MCF 10A (cell line): ENCODE measurements at regions of chr12 and their contacts with region 1.

Region 1: GRCh38 chr12:49636979-49637755 is 13.8 kb downstream of the PRPF40B start:
- DNase-seq: peak; percentile 59
- H3K4me3 Mint-ChIP-seq: no peak overlapping the region
- H3K27ac Mint-ChIP-seq: no peak overlapping the region
- H3K4me1 Mint-ChIP-seq: no peaks in the 10 kb centered on the region
- H3K27me3 Mint-ChIP-seq: no peaks in the 10 kb centered on the region
- CTCF ChIP-seq: peak; percentile 46

Region 2: DNA sequence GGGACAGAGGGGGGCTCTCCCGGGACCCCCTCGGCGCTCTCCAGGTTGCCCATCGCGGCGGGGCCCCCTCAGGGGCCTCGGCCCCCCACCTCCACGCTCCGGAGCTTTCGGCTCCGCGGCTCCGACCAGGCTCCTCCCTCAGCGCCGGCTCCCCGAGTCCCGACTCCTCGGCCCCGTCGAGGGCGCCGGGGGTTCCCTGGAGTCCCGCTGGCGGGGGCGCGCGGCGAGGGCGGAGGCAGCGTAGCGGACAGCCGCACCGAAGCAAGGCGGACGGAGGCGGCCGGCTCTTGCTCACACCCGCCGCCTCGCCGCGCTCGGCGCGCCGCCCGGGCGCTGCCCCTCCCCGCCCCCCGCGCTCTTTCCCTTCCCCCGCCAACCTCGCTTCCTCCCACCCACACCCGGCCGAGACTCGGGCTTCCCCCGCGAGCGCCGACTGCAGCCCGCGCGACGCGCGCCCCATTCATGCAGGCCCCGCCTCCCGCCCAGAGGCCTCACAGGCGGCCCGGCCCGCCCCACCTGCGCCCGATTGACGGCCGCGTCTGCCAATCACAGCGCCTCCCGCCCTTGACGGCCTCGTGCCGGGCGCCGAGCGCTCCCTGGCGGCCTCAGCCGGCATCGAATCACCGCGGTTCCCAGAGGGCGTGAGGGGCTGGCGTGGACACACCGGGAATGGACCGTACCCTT is 70.1 kb after region 1 on chr12 and contains the start of gene FMNL3:
- CTCF ChIA-PET with region 1: interaction called, 6 read pairs
- POLR2A ChIA-PET with region 1: no interaction called
- intact Hi-C with region 1: loop called (anchors 2 kb)
- DNase-seq: peak; percentile 89
- H3K4me3 Mint-ChIP-seq: peak within 1 kb of the TSS; percentile 50
- H3K27ac Mint-ChIP-seq: no peak within 1 kb of the TSS
- H3K4me1 Mint-ChIP-seq: peaks cover 5% of the 10 kb centered on the region
- H3K27me3 Mint-ChIP-seq: peaks cover 66% of the 10 kb centered on the region
- CTCF ChIP-seq: peak; percentile 91
- total RNA-seq, gene FMNL3: 0.58 and 0.91 TPM in 2 replicates